Activated T-helper 2 cell treated with anti-CD3 and anti-CD28 coated beads, Interferon-gamma antibody, Interleukin-2, Interleukin-4, amounts not matched to agents 10 μg/mL and 5 μg/mL and 100 μg/mL, durations not matched to agents 14 hours and 24 hours and 36 hours (primary cell): ENCODE measurements at regions of chrX and their contacts with region 1.

Region 1: GRCh38 chrX:18360867-18361266 is 6.4 kb upstream of the SCML2 start:
- DNase-seq: no peak
- H3K4me3 Mint-ChIP-seq: no peak overlapping the region
- H3K27ac Mint-ChIP-seq: no peak overlapping the region
- H3K4me1 Mint-ChIP-seq: no peaks in the 10 kb centered on the region
- H3K27me3 Mint-ChIP-seq: peaks cover 23% of the 10 kb centered on the region

Region 2: GRCh38 chrX:17187136-17187756 is 1173.6 kb before region 1 on chrX:
- intact Hi-C with region 1: no loop called
- DNase-seq: no peak
- H3K4me3 Mint-ChIP-seq: no peak overlapping the region
- H3K27ac Mint-ChIP-seq: no peak overlapping the region
- H3K4me1 Mint-ChIP-seq: no peaks in the 10 kb centered on the region
- H3K27me3 Mint-ChIP-seq: no peaks in the 10 kb centered on the region

Region 3: DNA sequence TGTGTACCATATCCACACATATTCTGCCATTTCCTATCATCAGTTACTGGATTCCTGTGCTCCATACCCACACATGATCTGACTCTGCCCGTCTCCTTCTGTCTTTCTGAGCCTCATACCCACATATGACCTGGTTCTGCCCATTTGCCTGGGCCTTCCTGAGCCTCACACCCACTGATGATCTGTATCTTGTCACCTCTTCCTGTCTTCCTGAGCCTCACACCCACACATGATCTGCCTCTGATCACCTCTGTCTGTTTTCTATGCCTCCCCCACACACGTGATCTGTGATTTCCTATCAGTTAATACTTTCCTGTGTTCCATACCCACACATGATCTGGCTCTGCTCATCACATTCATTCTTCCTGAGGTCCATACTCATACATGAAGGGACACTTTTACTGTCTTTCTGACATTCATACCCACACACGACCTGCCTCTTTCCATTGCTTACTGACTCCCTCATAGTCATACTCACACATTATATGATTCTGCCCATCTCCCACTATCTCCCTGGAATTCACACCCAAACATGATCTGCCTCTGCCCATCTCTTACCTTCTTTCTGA is 591.1 kb before region 1 on chrX:
- intact Hi-C with region 1: loop called (anchors 10 kb)
- DNase-seq: no peak
- H3K4me3 Mint-ChIP-seq: no peak overlapping the region
- H3K27ac Mint-ChIP-seq: no peak overlapping the region
- H3K4me1 Mint-ChIP-seq: no peaks in the 10 kb centered on the region
- H3K27me3 Mint-ChIP-seq: no peaks in the 10 kb centered on the region